Activated T-helper 1 cell treated with anti-CD3 and anti-CD28 coated beads, Interleukin-12 subunit alpha, Interleukin-12 subunit beta, Interleukin-2, Interleukin-4 antibody, amounts not matched to agents 30 ng/mL and 10 ng/mL and 1 ng/mL, durations not matched to agents 14 hours and 24 hours and 36 hours (primary cell): ENCODE measurements at regions of chr3 and their contacts with region 1.

Region 1: DNA sequence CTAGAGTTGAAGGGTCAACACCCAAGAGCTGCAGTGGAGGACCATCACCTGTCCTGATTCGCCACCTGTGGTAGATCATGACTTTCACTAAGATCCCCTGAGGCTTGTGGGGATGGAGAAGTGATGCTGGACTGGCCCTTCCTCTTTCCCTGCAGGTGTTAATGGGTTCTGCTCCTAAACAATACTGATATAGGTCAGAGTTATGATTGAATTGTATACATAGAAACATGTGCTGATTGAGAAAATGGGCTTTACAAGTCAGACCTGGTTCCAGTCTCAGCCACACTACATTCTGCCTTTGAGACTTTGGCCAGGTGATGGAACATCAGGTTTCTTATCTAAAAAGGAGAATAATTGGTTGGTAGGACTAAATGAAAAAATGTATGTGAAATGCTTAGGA is 418.9 kb upstream of the TPRG1 start:
- DNase-seq: no peak
- H3K4me3 Mint-ChIP-seq: no peak overlapping the region
- H3K27ac Mint-ChIP-seq: peak overlapping the region; percentile 60
- H3K4me1 Mint-ChIP-seq: peaks cover 33% of the 10 kb centered on the region
- H3K27me3 Mint-ChIP-seq: peaks cover 2% of the 10 kb centered on the region

Region 2: DNA sequence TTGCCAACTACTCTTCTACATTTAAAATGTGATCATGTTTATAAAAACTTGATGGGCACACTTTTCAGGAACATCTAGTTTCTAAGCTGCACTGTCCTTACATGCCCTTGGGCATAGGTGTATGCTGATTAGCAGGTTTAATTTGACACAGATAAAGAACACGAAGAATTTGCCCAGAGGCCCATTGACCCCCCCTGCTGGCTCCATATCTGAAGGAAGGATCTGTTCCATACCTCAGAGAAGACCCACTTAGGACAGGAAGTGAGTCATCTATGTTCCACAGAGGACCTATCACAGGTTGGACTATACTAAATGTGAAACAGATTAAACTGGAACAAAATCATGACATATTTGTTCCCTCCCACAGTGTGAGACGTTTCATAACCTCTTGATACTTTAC is 691.7 kb before region 1 on chr3:
- intact Hi-C with region 1: loop called (anchors 2 kb)
- DNase-seq: peak; percentile 38
- H3K4me3 Mint-ChIP-seq: peak overlapping the region; percentile 61
- H3K27ac Mint-ChIP-seq: peak overlapping the region; percentile 87
- H3K4me1 Mint-ChIP-seq: peaks cover 53% of the 10 kb centered on the region
- H3K27me3 Mint-ChIP-seq: no peaks in the 10 kb centered on the region

Region 3: GRCh38 chr3:188309437-188310269 is 443.2 kb before region 1 on chr3:
- intact Hi-C with region 1: loop called (anchors 1 kb)
- DNase-seq: no peak
- H3K4me3 Mint-ChIP-seq: peak overlapping the region; percentile 40
- H3K27ac Mint-ChIP-seq: peak overlapping the region; percentile 64
- H3K4me1 Mint-ChIP-seq: peaks cover 35% of the 10 kb centered on the region
- H3K27me3 Mint-ChIP-seq: peaks cover 9% of the 10 kb centered on the region

Region 4: DNA sequence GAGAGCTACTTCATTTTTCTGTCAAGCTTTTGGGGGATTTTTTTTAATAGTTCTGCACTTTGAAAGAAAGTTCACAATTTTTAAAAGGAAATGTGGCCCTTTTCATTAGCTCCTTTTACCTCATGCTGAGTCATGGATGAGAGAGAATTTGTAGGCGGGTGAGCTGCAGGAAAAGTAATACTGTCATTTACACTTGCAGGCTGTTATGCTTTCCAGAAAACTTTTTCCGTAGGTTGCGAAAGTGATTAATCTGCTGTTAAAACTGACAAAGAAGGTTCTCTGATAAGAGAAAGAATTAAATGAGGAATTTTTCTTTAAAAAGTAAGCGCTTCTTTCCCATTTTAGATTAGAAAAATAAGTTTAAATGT is 168.7 kb before region 1 on chr3:
- intact Hi-C with region 1: loop called (anchors 1 kb)
- DNase-seq: no peak
- H3K4me3 Mint-ChIP-seq: no peak overlapping the region
- H3K27ac Mint-ChIP-seq: no peak overlapping the region
- H3K4me1 Mint-ChIP-seq: no peaks in the 10 kb centered on the region
- H3K27me3 Mint-ChIP-seq: no peaks in the 10 kb centered on the region

Region 5: DNA sequence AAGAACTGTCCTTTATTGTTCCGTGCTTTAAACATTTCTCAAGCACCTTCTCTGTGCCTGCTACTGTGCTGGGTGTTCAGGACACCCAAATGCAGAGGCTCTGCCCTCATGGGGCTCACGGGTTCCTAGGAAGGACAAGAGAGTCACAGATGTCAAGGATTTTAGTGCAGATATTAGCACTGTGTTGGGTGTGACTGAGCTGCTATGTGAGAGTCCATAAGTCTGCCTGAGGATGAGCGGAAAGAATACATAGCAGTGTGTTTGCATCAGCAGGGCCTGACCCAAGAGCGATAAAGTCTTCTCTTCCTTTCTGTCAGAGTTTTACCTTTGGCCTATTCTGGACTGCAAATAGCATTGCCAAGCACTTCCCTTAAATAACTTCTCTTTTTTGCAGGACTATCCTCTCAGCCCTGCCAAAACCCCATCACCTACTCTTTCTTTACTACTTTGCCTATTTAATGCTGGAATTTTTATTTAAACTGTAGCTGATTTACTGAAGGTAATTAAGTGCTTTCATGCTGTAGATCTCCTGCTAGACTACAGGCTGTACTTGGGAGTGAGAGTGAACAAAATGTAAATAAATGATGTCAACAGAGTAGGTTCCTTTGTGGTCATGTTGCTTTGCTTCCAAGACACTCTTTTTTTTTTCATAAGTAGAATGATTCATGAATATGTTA is 40.5 kb before region 1 on chr3:
- intact Hi-C with region 1: no loop called
- DNase-seq: no peak
- H3K4me3 Mint-ChIP-seq: no peak overlapping the region
- H3K27ac Mint-ChIP-seq: no peak overlapping the region
- H3K4me1 Mint-ChIP-seq: no peaks in the 10 kb centered on the region
- H3K27me3 Mint-ChIP-seq: peaks cover 2% of the 10 kb centered on the region

Region 6: DNA sequence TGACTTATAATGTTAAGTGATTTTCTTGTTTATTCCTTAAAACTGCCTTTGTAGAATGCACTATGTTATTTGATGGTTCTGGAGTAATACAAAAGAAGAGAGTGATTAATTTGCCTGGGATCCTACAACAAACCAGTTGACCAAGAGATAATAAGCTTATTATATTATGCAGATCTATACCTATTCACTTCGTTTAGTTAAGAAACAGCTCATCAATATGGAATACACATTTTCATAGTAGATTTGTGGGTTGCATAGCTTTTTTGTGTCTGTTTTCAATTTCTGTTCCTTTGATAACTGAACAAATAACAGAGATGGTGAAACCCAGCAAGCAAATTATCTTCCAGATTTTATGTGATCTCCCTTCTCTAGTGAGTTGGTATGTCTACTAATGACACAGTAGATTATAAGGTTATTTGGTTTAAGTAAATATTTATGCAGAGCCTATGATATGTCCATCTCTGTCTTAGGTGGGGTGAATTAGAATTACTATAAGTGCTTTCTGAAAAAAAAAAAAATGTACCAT is 24.4 kb before region 1 on chr3:
- intact Hi-C with region 1: loop called (anchors 1 kb)
- DNase-seq: no peak
- H3K4me3 Mint-ChIP-seq: no peak overlapping the region
- H3K27ac Mint-ChIP-seq: no peak overlapping the region
- H3K4me1 Mint-ChIP-seq: peaks cover 22% of the 10 kb centered on the region
- H3K27me3 Mint-ChIP-seq: peaks cover 4% of the 10 kb centered on the region

Region 7: DNA sequence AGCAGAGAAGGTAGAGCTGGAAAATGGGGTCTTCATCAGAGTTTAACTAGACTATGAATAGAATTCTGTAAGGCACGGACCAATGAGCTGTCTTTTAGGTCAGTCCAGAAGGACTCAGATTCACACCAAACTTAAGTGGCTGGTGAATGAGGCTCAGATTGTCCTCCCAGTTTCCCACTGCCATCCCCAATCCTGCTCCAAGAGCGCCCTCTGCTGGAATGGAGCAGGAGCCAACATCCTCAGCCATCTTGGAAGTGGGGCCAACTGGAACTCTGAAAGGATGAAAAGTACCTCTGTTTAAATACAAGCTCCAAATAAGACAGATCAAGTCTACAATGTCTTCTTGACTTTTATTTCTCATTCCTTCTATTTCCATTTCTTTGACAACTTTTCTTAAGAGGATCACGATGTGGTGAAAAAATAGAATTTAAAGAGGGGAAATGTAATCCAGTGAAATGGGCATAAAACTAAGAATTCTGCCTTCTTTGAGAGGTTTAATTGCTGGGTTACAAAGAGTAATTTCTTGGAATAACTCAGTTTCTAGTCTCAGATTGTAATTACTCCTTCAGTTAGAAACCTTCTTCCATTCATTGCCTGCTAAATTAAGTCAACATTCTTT is 201.8 kb after region 1 on chr3:
- intact Hi-C with region 1: loop called (anchors 2 kb)
- DNase-seq: peak; percentile 68
- H3K4me3 Mint-ChIP-seq: no peak overlapping the region
- H3K27ac Mint-ChIP-seq: no peak overlapping the region
- H3K4me1 Mint-ChIP-seq: peaks cover 46% of the 10 kb centered on the region
- H3K27me3 Mint-ChIP-seq: no peaks in the 10 kb centered on the region

Region 8: DNA sequence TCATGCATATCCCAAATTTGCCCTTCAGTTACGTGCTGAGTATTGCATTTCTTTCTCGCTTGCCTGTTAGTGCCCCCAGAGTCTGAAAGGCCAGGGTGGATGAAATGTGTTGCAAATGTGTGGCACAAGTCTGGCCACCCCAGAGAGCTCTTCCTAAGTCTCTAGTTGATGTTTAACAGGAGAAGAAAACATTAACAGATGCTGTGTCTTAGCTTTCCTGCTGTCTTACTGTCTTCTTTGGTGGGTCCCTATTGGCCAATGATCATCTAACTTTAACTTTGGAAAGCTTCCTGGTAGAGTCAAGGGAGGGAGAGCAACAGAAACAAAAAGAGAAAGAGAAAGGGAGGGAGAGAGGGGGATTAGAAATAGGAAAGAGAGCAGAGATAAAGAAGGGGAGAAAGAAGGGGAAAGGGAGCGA is 1444.5 kb after region 1 on chr3:
- intact Hi-C with region 1: no loop called
- DNase-seq: no peak
- H3K4me3 Mint-ChIP-seq: no peak overlapping the region
- H3K27ac Mint-ChIP-seq: no peak overlapping the region
- H3K4me1 Mint-ChIP-seq: no peaks in the 10 kb centered on the region
- H3K27me3 Mint-ChIP-seq: peaks cover 10% of the 10 kb centered on the region